ENCODE measurements at regions of chr19 and their contacts with region 1.

Region 1: DNA sequence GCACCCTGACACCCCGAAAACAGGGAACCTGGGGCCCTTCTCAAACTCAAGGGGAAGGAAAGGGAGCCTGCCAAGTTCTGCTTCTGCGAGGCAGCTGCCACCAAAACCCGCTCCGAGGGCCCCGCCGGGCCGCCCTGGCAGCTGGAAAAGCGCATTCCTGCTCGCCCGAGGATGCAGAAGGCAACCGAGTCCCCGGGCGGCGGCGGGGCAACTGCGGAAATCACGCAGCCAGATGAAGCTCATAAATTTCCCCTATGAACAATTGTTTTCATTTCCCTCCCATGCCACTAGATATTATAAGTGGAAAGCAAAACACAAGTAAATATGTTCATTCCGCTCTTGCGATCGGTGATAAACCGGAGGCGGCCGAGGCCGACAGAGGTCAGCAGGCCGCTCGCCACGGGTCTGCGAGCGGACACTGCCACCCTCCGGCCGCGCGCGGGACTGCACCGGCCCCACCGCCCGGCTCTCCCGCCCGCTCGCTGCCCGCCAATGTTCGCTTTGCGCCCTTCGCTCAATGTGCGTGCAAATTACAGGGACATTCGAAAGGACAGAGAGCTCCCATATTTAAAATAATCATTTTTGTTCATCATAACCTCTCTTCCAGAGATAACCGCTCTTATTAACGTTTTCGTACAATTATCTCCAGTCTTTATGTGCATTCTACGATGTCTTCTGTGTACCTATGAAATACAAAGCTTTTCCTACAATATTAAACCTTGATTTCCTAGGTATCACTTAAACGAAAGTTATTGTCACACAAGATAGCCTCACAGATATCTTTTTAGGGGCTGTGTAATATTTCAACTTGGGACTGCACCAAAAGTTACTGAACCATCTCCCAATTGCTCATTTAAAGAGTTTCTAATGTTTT is 120.8 kb upstream of the ZNF507 start:
- DNase-seq: peak; percentile 58
- ATAC-seq: peak; percentile 84
- H3K4me3 ChIP-seq: peak overlapping the region in 3 of 5 experiments; percentile 16 to 32 (median 23)
- H3K4me3 Mint-ChIP-seq: peak overlapping the region; percentile 77
- H3K27ac ChIP-seq: no peak overlapping the region
- H3K27ac Mint-ChIP-seq: no peak overlapping the region
- H3K4me1 ChIP-seq: peaks cover 9 to 14% of the 10 kb centered on the region in 2 donors
- H3K4me1 Mint-ChIP-seq: peaks cover 7% of the 10 kb centered on the region
- H3K27me3 ChIP-seq: peaks cover 0 to 26% (median 10%) of the 10 kb centered on the region in 4 experiments
- H3K27me3 Mint-ChIP-seq: peaks cover 39% of the 10 kb centered on the region
- CTCF ChIP-seq: peak; percentile 99

Region 2: GRCh38 chr19:30666301-30666803 is 1558.3 kb before region 1 on chr19:
- CTCF ChIA-PET with region 1: interaction called, 13 read pairs
- POLR2A ChIA-PET with region 1: no interaction called
- intact Hi-C with region 1: no loop called
- DNase-seq: peak; percentile 27
- ATAC-seq: peak; percentile 21
- H3K4me3 ChIP-seq: no peak overlapping the region
- H3K4me3 Mint-ChIP-seq: no peak overlapping the region
- H3K27ac ChIP-seq: no peak overlapping the region
- H3K27ac Mint-ChIP-seq: no peak overlapping the region
- H3K4me1 ChIP-seq: no peaks in the 10 kb centered on the region
- H3K4me1 Mint-ChIP-seq: no peaks in the 10 kb centered on the region
- H3K27me3 ChIP-seq: peaks cover 0 to 30% (median 0%) of the 10 kb centered on the region in 4 experiments
- H3K27me3 Mint-ChIP-seq: peaks cover 8% of the 10 kb centered on the region
- CTCF ChIP-seq: peak; percentile 81

Region 3: GRCh38 chr19:30682999-30683536 is 1541.5 kb before region 1 on chr19:
- CTCF ChIA-PET with region 1: interaction called, 23 read pairs
- POLR2A ChIA-PET with region 1: no interaction called
- intact Hi-C with region 1: no loop called
- DNase-seq: peak; percentile 21
- ATAC-seq: no peak
- H3K4me3 ChIP-seq: no peak overlapping the region
- H3K4me3 Mint-ChIP-seq: no peak overlapping the region
- H3K27ac ChIP-seq: no peak overlapping the region
- H3K27ac Mint-ChIP-seq: no peak overlapping the region
- H3K4me1 ChIP-seq: no peaks in the 10 kb centered on the region
- H3K4me1 Mint-ChIP-seq: no peaks in the 10 kb centered on the region
- H3K27me3 ChIP-seq: peaks cover 0 to 3% (median 0%) of the 10 kb centered on the region in 4 experiments
- H3K27me3 Mint-ChIP-seq: peaks cover 7% of the 10 kb centered on the region
- CTCF ChIP-seq: peak; percentile 69

Region 4: GRCh38 chr19:30784850-30785457 is 1439.7 kb before region 1 on chr19:
- CTCF ChIA-PET with region 1: interaction called, 5 read pairs
- POLR2A ChIA-PET with region 1: no interaction called
- intact Hi-C with region 1: loop called (anchors 5 kb)
- DNase-seq: peak; percentile 29
- ATAC-seq: no peak
- H3K4me3 ChIP-seq: no peak overlapping the region
- H3K4me3 Mint-ChIP-seq: no peak overlapping the region
- H3K27ac ChIP-seq: no peak overlapping the region
- H3K27ac Mint-ChIP-seq: no peak overlapping the region
- H3K4me1 ChIP-seq: no peaks in the 10 kb centered on the region
- H3K4me1 Mint-ChIP-seq: no peaks in the 10 kb centered on the region
- H3K27me3 ChIP-seq: no peaks in the 10 kb centered on the region
- H3K27me3 Mint-ChIP-seq: no peaks in the 10 kb centered on the region
- CTCF ChIP-seq: peak; percentile 55

Region 5: GRCh38 chr19:32012886-32013631 is 211.5 kb before region 1 on chr19:
- CTCF ChIA-PET with region 1: no interaction called
- POLR2A ChIA-PET with region 1: no interaction called
- intact Hi-C with region 1: no loop called
- DNase-seq: no peak
- ATAC-seq: no peak
- H3K4me3 ChIP-seq: no peak overlapping the region
- H3K4me3 Mint-ChIP-seq: no peak overlapping the region
- H3K27ac ChIP-seq: no peak overlapping the region
- H3K27ac Mint-ChIP-seq: no peak overlapping the region
- H3K4me1 ChIP-seq: no peaks in the 10 kb centered on the region
- H3K4me1 Mint-ChIP-seq: no peaks in the 10 kb centered on the region
- H3K27me3 ChIP-seq: no peaks in the 10 kb centered on the region
- H3K27me3 Mint-ChIP-seq: no peaks in the 10 kb centered on the region
- CTCF ChIP-seq: no peak

Region 6: GRCh38 chr19:32174386-32175113 is 50.1 kb before region 1 on chr19:
- CTCF ChIA-PET with region 1: no interaction called
- POLR2A ChIA-PET with region 1: no interaction called
- intact Hi-C with region 1: no loop called
- DNase-seq: no peak
- ATAC-seq: no peak
- H3K4me3 ChIP-seq: no peak overlapping the region
- H3K4me3 Mint-ChIP-seq: no peak overlapping the region
- H3K27ac ChIP-seq: no peak overlapping the region
- H3K27ac Mint-ChIP-seq: no peak overlapping the region
- H3K4me1 ChIP-seq: no peaks in the 10 kb centered on the region
- H3K4me1 Mint-ChIP-seq: no peaks in the 10 kb centered on the region
- H3K27me3 ChIP-seq: no peaks in the 10 kb centered on the region
- H3K27me3 Mint-ChIP-seq: no peaks in the 10 kb centered on the region
- CTCF ChIP-seq: no peak